ENCODE measurements at regions of chr18 and their contacts with region 1.

Region 1: DNA sequence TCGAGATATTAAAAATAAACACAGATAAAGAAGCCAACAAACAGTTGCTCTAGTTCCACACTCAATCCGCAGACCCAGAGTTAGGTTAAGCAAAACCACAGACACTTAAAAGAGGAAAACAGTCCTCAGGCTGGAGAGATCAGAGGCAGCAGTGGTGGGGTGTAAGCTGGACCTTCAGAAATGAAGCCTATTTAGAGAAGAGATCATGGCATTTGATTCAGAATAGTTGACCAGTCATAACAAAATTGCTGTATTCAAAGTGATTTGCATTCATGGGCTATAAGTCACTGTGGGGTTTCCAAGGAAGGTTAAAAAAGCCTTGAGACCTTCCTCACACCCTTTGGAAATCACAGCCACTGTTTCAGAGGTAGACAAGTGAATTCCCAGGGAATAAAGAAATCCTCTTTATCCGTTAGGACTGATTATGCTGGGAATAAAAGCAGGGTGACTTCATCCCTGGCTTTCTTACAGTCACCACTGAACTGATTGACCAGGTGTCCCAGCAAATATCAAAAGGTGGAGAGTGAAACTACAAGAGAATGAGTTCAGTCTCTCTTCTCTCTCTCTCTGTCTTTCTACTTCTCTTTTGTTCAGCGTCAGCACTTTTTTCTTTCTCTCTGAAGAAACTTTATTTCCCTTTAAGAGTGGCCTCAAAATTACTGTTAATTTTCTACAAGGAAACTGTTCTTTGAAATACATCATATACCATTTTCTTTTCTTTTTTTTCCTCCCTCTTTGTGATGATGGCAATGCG is 171.8 kb upstream of the PIK3C3 start:
- DNase-seq: no peak
- ATAC-seq: no peak
- H3K4me3 ChIP-seq: no peak overlapping the region
- H3K4me3 Mint-ChIP-seq: no peak overlapping the region
- H3K27ac ChIP-seq: no peak overlapping the region
- H3K27ac Mint-ChIP-seq: no peak overlapping the region
- H3K4me1 ChIP-seq: no peaks in the 10 kb centered on the region
- H3K4me1 Mint-ChIP-seq: no peaks in the 10 kb centered on the region
- H3K27me3 ChIP-seq: no peaks in the 10 kb centered on the region
- H3K27me3 Mint-ChIP-seq: no peaks in the 10 kb centered on the region
- CTCF ChIP-seq: no peak

Region 2: GRCh38 chr18:41721103-41721790 is 62.0 kb before region 1 on chr18:
- CTCF ChIA-PET with region 1: no interaction called
- POLR2A ChIA-PET with region 1: no interaction called
- intact Hi-C with region 1: no loop called
- DNase-seq: no peak
- ATAC-seq: no peak
- H3K4me3 ChIP-seq: no peak overlapping the region
- H3K4me3 Mint-ChIP-seq: no peak overlapping the region
- H3K27ac ChIP-seq: no peak overlapping the region
- H3K27ac Mint-ChIP-seq: no peak overlapping the region
- H3K4me1 ChIP-seq: no peaks in the 10 kb centered on the region
- H3K4me1 Mint-ChIP-seq: no peaks in the 10 kb centered on the region
- H3K27me3 ChIP-seq: no peaks in the 10 kb centered on the region
- H3K27me3 Mint-ChIP-seq: no peaks in the 10 kb centered on the region
- CTCF ChIP-seq: no peak

Region 3: DNA sequence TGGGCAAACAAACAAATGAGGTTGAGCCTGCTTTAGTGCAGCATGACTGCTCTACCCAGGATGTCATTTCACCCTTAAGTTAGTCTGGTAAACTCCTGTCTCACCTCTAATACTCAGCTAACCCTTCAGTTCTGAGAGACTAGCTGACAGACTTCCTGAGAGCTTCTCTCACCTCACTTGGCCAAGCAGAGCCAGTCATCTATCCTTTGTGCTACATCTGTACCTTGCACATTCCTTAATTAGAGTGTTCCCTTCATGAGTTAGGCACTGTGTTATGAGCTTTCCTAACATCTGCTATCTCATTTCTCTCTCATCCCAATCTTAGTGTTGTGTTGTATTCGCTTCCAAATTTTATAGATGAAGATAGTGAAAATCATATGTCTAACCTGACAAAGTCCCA is 48.3 kb before region 1 on chr18:
- CTCF ChIA-PET with region 1: no interaction called
- POLR2A ChIA-PET with region 1: no interaction called
- intact Hi-C with region 1: loop called in 1 of 2 experiments (anchors 5 kb)
- DNase-seq: no peak
- ATAC-seq: no peak
- H3K4me3 ChIP-seq: no peak overlapping the region
- H3K4me3 Mint-ChIP-seq: no peak overlapping the region
- H3K27ac ChIP-seq: no peak overlapping the region
- H3K27ac Mint-ChIP-seq: no peak overlapping the region
- H3K4me1 ChIP-seq: no peaks in the 10 kb centered on the region
- H3K4me1 Mint-ChIP-seq: no peaks in the 10 kb centered on the region
- H3K27me3 ChIP-seq: no peaks in the 10 kb centered on the region
- H3K27me3 Mint-ChIP-seq: no peaks in the 10 kb centered on the region
- CTCF ChIP-seq: no peak

Region 4: GRCh38 chr18:42689310-42689709 is 906.1 kb after region 1 on chr18:
- CTCF ChIA-PET with region 1: no interaction called
- POLR2A ChIA-PET with region 1: no interaction called
- intact Hi-C with region 1: no loop called
- DNase-seq: no peak
- ATAC-seq: no peak
- H3K4me3 ChIP-seq: no peak overlapping the region
- H3K4me3 Mint-ChIP-seq: no peak overlapping the region
- H3K27ac ChIP-seq: no peak overlapping the region
- H3K27ac Mint-ChIP-seq: no peak overlapping the region
- H3K4me1 ChIP-seq: no peaks in the 10 kb centered on the region
- H3K4me1 Mint-ChIP-seq: no peaks in the 10 kb centered on the region
- H3K27me3 ChIP-seq: no peaks in the 10 kb centered on the region
- H3K27me3 Mint-ChIP-seq: no peaks in the 10 kb centered on the region
- CTCF ChIP-seq: no peak